Activated T-helper 1 cell treated with anti-CD3 and anti-CD28 coated beads, Interleukin-12 subunit alpha, Interleukin-12 subunit beta, Interleukin-2, Interleukin-4 antibody, amounts not matched to agents 30 ng/mL and 10 ng/mL and 1 ng/mL, durations not matched to agents 14 hours and 24 hours and 36 hours (primary cell): ENCODE measurements at regions of chr13 and their contacts with region 1.

Region 1: GRCh38 chr13:39777527-39778061 is 122.1 kb downstream of the COG6 start:
- DNase-seq: peak; percentile 16
- H3K4me3 Mint-ChIP-seq: peak overlapping the region; percentile 45
- H3K27ac Mint-ChIP-seq: peak overlapping the region; percentile 91
- H3K4me1 Mint-ChIP-seq: peaks cover 50% of the 10 kb centered on the region
- H3K27me3 Mint-ChIP-seq: no peaks in the 10 kb centered on the region

Region 2: DNA sequence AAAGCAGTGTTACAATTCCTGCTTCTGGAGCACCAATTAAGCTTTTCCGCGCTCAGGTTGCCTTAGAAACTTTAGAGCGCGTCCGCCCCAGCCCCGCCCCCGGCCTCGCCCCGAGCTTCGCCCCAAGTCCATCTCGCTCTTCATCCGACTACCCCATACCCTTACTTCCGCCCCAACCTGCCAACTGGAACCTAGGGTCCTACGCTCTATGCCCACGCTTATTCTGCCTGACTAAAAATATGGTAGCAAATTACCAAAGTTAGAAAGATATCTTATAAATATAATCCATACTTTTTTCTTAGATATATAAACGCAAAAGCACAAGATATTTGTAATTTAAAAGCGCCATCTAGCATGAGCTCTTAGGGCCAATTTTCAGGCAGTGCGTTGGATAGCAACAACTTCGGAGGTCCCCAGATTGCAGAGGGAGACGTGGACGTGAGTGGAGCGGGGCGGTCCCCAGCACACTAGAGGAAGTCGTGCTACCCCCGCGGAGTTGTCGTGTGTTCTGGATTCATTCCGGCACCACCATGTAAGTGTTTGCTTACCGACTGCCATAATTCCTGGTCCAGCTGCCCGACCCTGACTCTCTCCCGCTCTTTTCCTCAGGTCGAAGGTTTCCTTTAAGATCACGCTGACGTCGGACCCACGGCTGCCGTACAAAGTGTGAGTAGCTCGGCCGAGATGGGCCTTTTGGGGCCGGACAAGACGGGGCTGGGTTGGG is 1428.0 kb before region 1 on chr13 and contains the start of gene UFM1:
- intact Hi-C with region 1: loop called (anchors 10 kb)
- DNase-seq: peak; percentile 81
- H3K4me3 Mint-ChIP-seq: peak within 1 kb of the TSS; percentile 98
- H3K27ac Mint-ChIP-seq: peak within 1 kb of the TSS; percentile 100
- H3K4me1 Mint-ChIP-seq: peaks cover 36% of the 10 kb centered on the region
- H3K27me3 Mint-ChIP-seq: peaks cover 3% of the 10 kb centered on the region
- total RNA-seq, gene UFM1: 66.9 and 71.3 TPM in 2 replicates

Region 3: DNA sequence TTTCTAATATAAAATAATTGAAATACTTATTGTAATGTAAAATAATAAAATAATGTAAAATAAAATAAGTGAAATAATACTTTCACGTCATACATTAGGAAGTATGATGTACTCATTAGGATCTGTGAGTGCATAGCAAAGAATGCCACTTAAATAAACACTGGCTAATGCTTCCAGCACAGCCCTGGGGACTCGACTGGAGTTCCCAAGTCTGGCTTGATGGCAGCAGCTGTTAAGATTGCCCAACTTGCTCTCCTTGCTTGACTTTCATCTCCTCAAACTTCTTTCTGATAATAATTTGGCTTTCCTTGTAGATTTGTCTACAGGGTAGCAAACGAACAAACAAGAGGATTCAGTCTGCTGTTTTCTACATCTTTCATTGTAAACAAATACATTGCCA is 69.7 kb after region 1 on chr13:
- intact Hi-C with region 1: no loop called
- DNase-seq: no peak
- H3K4me3 Mint-ChIP-seq: no peak overlapping the region
- H3K27ac Mint-ChIP-seq: no peak overlapping the region
- H3K4me1 Mint-ChIP-seq: no peaks in the 10 kb centered on the region
- H3K27me3 Mint-ChIP-seq: peaks cover 5% of the 10 kb centered on the region

Region 4: DNA sequence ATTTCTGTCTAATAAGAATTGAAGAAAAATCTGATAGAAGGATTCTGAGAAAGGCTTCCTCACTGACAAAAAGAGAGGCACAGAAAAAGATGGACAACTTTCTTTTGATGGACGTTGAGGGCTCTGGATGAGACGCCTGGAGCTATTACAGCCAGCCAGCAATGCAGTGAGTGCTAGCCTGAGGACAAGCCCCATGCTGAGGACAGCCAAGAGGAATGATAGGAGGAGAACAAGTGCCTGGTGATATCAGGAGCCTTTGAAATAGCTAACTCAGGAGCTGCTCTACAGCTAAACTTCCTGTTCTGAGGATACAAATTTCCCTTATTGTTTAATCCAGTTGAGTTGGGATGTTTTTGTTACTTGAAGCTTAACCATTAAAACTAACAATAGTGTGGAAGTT is 90.2 kb after region 1 on chr13:
- intact Hi-C with region 1: loop called (anchors 2 kb)
- DNase-seq: no peak
- H3K4me3 Mint-ChIP-seq: no peak overlapping the region
- H3K27ac Mint-ChIP-seq: no peak overlapping the region
- H3K4me1 Mint-ChIP-seq: peaks cover 18% of the 10 kb centered on the region
- H3K27me3 Mint-ChIP-seq: peaks cover 2% of the 10 kb centered on the region

Region 5: DNA sequence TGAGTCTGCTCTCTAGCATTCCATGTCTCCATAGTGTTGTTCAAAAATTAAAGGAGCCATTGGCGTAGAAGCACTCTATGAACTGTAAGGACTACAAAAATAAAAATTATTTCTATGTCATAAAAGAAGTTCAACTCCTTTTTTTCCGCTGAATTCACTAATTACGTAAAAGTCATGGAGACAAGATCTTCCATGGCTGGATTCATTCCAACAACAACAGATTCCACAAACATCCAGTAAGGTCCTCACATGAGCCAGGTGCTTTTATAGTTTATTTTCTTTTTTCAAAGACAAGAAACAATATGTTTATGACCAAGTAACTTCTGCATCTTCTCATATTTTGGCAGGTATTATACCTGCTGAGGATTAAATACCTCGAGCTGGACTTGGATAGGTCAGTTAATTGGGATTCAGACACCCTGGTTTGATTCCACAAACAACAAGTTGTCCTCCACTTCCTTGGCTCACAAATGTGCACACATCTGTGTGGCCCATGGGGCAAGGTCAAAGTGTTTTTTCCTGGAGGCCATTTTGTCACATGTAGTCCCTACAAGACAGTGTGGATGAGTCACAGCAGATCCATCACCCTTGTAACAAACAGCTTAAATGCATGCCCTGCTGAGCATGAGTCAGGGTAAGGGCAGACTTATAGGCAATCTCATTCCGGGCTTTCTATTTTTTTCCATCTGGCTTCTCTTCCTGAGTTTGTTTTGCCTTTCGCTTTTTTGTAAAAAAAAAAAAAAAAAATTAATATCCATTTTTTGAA is 353.5 kb after region 1 on chr13:
- intact Hi-C with region 1: loop called (anchors 1 kb)
- DNase-seq: no peak
- H3K4me3 Mint-ChIP-seq: no peak overlapping the region
- H3K27ac Mint-ChIP-seq: peak overlapping the region; percentile 12
- H3K4me1 Mint-ChIP-seq: peaks cover 63% of the 10 kb centered on the region
- H3K27me3 Mint-ChIP-seq: no peaks in the 10 kb centered on the region

Region 6: GRCh38 chr13:40306817-40307216 is 529.2 kb after region 1 on chr13:
- intact Hi-C with region 1: loop called (anchors 10 kb)
- DNase-seq: no peak
- H3K4me3 Mint-ChIP-seq: peak overlapping the region; percentile 1
- H3K27ac Mint-ChIP-seq: peak overlapping the region; percentile 1
- H3K4me1 Mint-ChIP-seq: peaks cover 25% of the 10 kb centered on the region
- H3K27me3 Mint-ChIP-seq: no peaks in the 10 kb centered on the region

Region 7: GRCh38 chr13:40764587-40765403 is 987.2 kb after region 1 on chr13:
- intact Hi-C with region 1: loop called (anchors 2 kb)
- DNase-seq: no peak
- H3K4me3 Mint-ChIP-seq: peak overlapping the region; percentile 23
- H3K27ac Mint-ChIP-seq: peak overlapping the region; percentile 88
- H3K4me1 Mint-ChIP-seq: peaks cover 39% of the 10 kb centered on the region
- H3K27me3 Mint-ChIP-seq: no peaks in the 10 kb centered on the region